H1 (cell line): ENCODE measurements at regions of chr20 and their contacts with region 1.

Region 1: GRCh38 chr20:31723319-31724078 is 831 bp upstream of the BCL2L1 start:
- DNase-seq: peak; percentile 96 to 99
- H3K4me3 ChIP-seq: peak overlapping the region; percentile 48 to 94 (median 70)
- H3K27ac ChIP-seq: peak overlapping the region; percentile 95
- H3K4me1 ChIP-seq: peaks cover 15 to 37% (median 33%) of the 10 kb centered on the region in 4 experiments
- H3K27me3 ChIP-seq: no peaks in the 10 kb centered on the region
- CTCF ChIP-seq: peak; percentile 97 to 99 (median 98)
- EP300 ChIP-seq: no peak
- POLR2A ChIP-seq: peak in 1 of 2 experiments; percentile 89; a peak in 2 of 3 replicates
- RAD21 ChIP-seq: peak; percentile 98 to 99

Region 2: DNA sequence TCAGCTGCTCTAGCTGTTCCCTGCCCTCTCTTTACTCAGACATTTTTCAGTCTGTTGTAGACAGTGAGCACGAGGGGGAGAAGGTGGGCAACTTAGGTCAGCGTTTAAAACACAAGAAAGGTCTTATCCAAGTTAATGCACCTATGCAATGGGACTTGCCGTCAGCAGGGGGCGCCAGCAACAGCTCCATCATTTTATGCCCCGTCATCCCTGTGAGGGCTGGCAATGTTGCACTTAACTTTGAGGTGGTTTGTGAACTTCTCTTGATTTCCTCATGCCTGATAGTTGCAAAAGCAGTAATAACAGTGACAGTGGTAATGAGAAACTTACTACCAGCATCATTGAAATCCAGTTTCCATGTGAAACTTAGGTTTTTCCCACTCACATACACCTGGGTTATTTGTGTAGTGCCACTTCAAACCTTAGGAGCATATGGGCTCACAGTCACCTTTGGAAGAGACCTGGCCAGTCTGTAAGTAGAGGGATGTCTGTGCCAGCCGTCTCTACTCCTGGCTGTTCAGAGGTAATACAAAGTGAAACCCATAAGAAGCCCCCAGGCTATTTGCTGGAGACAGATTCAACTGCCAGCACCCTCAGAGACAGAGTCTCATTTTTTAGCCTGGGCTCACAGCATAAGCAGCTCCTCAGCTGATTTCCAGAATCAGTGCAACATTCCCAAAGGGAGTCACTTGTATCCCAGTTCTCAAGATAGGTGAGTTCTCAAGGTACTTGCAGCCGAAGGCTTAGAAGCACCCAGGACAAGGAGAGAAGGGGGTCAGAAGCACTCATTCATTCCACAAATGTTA is 163.2 kb before region 1 on chr20:
- CTCF ChIA-PET with region 1: interaction called, 10 read pairs
- POLR2A ChIA-PET with region 1: interaction called, 3 read pairs
- DNase-seq: peak in 1 of 2 experiments; percentile 86
- H3K4me3 ChIP-seq: no peak overlapping the region
- H3K27ac ChIP-seq: peak overlapping the region; percentile 44; the same call in 1 of the 2 replicates
- H3K4me1 ChIP-seq: peaks cover 0 to 6% (median under 1%) of the 10 kb centered on the region in 4 experiments; a peak in 3 of 7 replicates
- H3K27me3 ChIP-seq: no peaks in the 10 kb centered on the region
- CTCF ChIP-seq: peak; percentile 96 to 100 (median 99)
- EP300 ChIP-seq: 0 out of 3 replicates have a peak, but pooled peaks of 1 of the 2 experiments have one; percentile 51
- POLR2A ChIP-seq: peak in 1 of 2 experiments; percentile 30; a peak in 2 of 3 replicates
- RAD21 ChIP-seq: peak; percentile 71 to 73

Region 3: GRCh38 chr20:31644701-31645100 is 78.8 kb before region 1 on chr20:
- CTCF ChIA-PET with region 1: interaction called, 21 read pairs
- POLR2A ChIA-PET with region 1: no interaction called
- DNase-seq: no peak
- H3K4me3 ChIP-seq: no peak overlapping the region
- H3K27ac ChIP-seq: no peak overlapping the region
- H3K4me1 ChIP-seq: peaks cover 0 to 2% (median 2%) of the 10 kb centered on the region in 4 experiments; a peak in 2 of 7 replicates
- H3K27me3 ChIP-seq: no peaks in the 10 kb centered on the region
- CTCF ChIP-seq: no peak
- EP300 ChIP-seq: no peak
- POLR2A ChIP-seq: no peak
- RAD21 ChIP-seq: no peak

Region 4: GRCh38 chr20:31674895-31675827 is 48.3 kb before region 1 on chr20:
- CTCF ChIA-PET with region 1: interaction called, 12 read pairs
- POLR2A ChIA-PET with region 1: interaction called, 3 read pairs
- DNase-seq: no peak
- H3K4me3 ChIP-seq: no peak overlapping the region
- H3K27ac ChIP-seq: no peak overlapping the region
- H3K4me1 ChIP-seq: peaks cover 3 to 7% (median 6%) of the 10 kb centered on the region in 4 experiments; a peak in 6 of 7 replicates
- H3K27me3 ChIP-seq: no peaks in the 10 kb centered on the region
- CTCF ChIP-seq: no peak
- EP300 ChIP-seq: no peak
- POLR2A ChIP-seq: no peak
- RAD21 ChIP-seq: no peak

Region 5: DNA sequence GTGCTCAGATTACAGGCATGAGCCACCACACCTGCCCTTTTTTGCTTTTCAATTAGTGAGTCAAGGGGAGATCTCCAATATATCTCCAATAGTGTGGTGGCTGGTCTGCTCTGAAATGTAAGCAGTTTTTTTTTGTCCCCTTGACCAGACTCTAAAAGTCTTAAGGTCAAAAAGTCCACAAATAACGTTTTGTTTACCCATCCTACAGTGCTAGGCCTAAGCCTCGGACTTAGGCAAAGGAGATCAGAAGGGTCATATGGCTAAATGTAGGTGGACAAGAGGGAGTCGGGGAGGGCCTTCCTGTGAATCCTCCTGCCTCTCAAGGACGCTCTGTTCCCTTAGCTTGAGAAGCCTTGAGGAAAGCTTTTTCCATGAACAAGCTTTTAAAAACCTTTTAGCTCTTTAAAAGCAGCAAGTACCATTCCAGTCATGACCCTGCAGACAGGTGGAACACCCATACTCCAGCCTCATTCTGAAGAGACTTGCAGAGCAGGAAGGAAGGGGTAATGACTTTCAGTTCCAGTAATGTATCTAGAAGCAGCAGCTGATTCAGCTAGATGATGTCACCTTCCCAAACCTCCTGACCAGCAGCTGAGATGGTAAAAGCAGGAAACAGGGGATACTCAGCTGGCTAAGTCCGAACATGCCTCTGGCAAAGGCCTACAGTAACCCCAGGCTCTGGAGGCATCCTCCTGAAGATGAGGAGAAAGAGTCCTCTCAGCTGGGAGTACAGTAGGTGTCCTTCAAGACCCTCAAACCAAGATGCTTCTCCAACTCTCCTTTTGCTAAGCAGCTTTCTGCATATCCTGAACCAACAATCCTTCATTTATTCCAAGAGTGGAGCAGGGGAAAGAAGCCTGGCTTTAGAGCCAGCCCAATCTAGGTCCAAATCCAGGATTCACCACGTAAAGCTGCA is 24.4 kb before region 1 on chr20:
- CTCF ChIA-PET with region 1: interaction called, 28 read pairs
- POLR2A ChIA-PET with region 1: interaction called, 17 read pairs
- DNase-seq: no peak
- H3K4me3 ChIP-seq: no peak overlapping the region
- H3K27ac ChIP-seq: no peak overlapping the region
- H3K4me1 ChIP-seq: peaks cover 9 to 15% (median 10%) of the 10 kb centered on the region in 4 experiments
- H3K27me3 ChIP-seq: no peaks in the 10 kb centered on the region
- CTCF ChIP-seq: no peak
- EP300 ChIP-seq: no peak
- POLR2A ChIP-seq: no peak
- RAD21 ChIP-seq: no peak

Region 6: GRCh38 chr20:31738729-31739561 is 15.4 kb after region 1 on chr20 and contains the start of gene TPX2:
- CTCF ChIA-PET with region 1: interaction called, 27 read pairs
- POLR2A ChIA-PET with region 1: interaction called, 8 read pairs
- DNase-seq: peak; percentile 87 to 90
- H3K4me3 ChIP-seq: peak within 1 kb of the TSS; percentile 78 to 99 (median 82)
- H3K27ac ChIP-seq: peak within 1 kb of the TSS; percentile 57; the same call in 1 of the 2 replicates
- H3K4me1 ChIP-seq: peaks cover 0 to 8% (median 2%) of the 10 kb centered on the region in 4 experiments; a peak in 3 of 7 replicates
- H3K27me3 ChIP-seq: no peaks in the 10 kb centered on the region; a peak in 1 of 7 replicates
- CTCF ChIP-seq: peak; percentile 36 to 41 (median 40); a peak in 3 of 4 replicates
- EP300 ChIP-seq: peak in 1 of 2 experiments; percentile 59; a peak in 1 of 3 replicates
- POLR2A ChIP-seq: peak; percentile 86 to 90
- RAD21 ChIP-seq: no peak; a peak in 1 of 4 replicates
- total RNA-seq, gene TPX2: 122 and 125 TPM in 2 replicates

Region 7: DNA sequence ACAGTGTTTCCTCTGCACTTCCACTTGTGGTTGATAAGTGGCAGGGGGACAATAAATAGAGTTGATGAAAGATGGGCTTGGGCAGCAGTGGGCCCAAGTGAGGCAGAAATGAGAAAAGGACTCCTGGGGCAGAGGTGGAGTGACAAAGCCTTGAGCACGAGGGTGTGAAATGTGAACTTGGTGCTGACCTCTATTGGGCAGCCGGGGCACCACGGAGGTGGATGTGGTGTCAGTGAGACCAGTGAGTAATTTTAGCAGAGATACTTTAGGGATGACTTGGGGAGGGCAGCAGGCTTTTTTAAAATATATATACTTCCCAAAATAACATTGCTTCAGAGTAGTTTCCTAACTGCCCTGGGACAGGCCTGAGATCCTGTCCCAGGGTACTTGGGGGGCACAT is 65.1 kb after region 1 on chr20:
- CTCF ChIA-PET with region 1: no interaction called
- POLR2A ChIA-PET with region 1: no interaction called
- DNase-seq: no peak
- H3K4me3 ChIP-seq: no peak overlapping the region
- H3K27ac ChIP-seq: no peak overlapping the region
- H3K4me1 ChIP-seq: peaks cover 3 to 11% (median 6%) of the 10 kb centered on the region in 4 experiments; a peak in 6 of 7 replicates
- H3K27me3 ChIP-seq: no peaks in the 10 kb centered on the region
- CTCF ChIP-seq: peak; percentile 50 to 71 (median 59)
- EP300 ChIP-seq: no peak
- POLR2A ChIP-seq: peak in 1 of 2 experiments; percentile 48; a peak in 2 of 3 replicates
- RAD21 ChIP-seq: peak in 1 of 2 experiments; percentile 35; a peak in 2 of 4 replicates

Region 8: GRCh38 chr20:31934968-31935764 is 211.7 kb after region 1 on chr20:
- CTCF ChIA-PET with region 1: no interaction called
- POLR2A ChIA-PET with region 1: no interaction called
- DNase-seq: peak; percentile 50 to 65
- H3K4me3 ChIP-seq: no peak overlapping the region
- H3K27ac ChIP-seq: no peak overlapping the region
- H3K4me1 ChIP-seq: peaks cover 0 to 8% (median 4%) of the 10 kb centered on the region in 4 experiments; a peak in 6 of 7 replicates
- H3K27me3 ChIP-seq: peaks cover 2 to 12% (median 6%) of the 10 kb centered on the region in 4 experiments; a peak in 4 of 7 replicates
- CTCF ChIP-seq: peak; percentile 67 to 96 (median 77)
- EP300 ChIP-seq: no peak
- POLR2A ChIP-seq: no peak
- RAD21 ChIP-seq: peak; percentile 72 to 82